Lower lobe of right lung (tissue), 2 donors: ENCODE measurements at regions of chr11 and their contacts with region 1.

Region 1: GRCh38 chr11:124415356-124415923 is 9.2 kb downstream of the OR8B4 start:
- DNase-seq: no peak
- ATAC-seq: no peak
- H3K4me3 ChIP-seq: no peak overlapping the region
- H3K27ac ChIP-seq: no peak overlapping the region
- H3K4me1 ChIP-seq: no peaks in the 10 kb centered on the region
- H3K27me3 ChIP-seq: no peaks in the 10 kb centered on the region
- CTCF ChIP-seq: peak; percentile 85

Region 2: GRCh38 chr11:124467381-124467927 is 52.0 kb after region 1 on chr11:
- intact Hi-C with region 1: no loop called
- DNase-seq: no peak
- ATAC-seq: peak; percentile 29 to 37
- H3K4me3 ChIP-seq: no peak overlapping the region
- H3K27ac ChIP-seq: no peak overlapping the region
- H3K4me1 ChIP-seq: no peaks in the 10 kb centered on the region
- H3K27me3 ChIP-seq: no peaks in the 10 kb centered on the region
- CTCF ChIP-seq: no peak

Region 3: GRCh38 chr11:124586238-124586860 is 170.9 kb after region 1 on chr11:
- intact Hi-C with region 1: loop called (anchors 10 kb)
- DNase-seq: peak; percentile 59
- ATAC-seq: no peak
- H3K4me3 ChIP-seq: no peak overlapping the region
- H3K27ac ChIP-seq: no peak overlapping the region
- H3K4me1 ChIP-seq: no peaks in the 10 kb centered on the region
- H3K27me3 ChIP-seq: peaks cover 7% of the 10 kb centered on the region
- CTCF ChIP-seq: peak; percentile 58

Region 4: GRCh38 chr11:124656774-124657630 is 241.6 kb after region 1 on chr11:
- intact Hi-C with region 1: no loop called
- DNase-seq: no peak
- ATAC-seq: peak; percentile 79 to 86
- H3K4me3 ChIP-seq: no peak overlapping the region
- H3K27ac ChIP-seq: no peak overlapping the region
- H3K4me1 ChIP-seq: no peaks in the 10 kb centered on the region
- H3K27me3 ChIP-seq: no peaks in the 10 kb centered on the region
- CTCF ChIP-seq: no peak

Region 5: GRCh38 chr11:125022551-125022950 is 607.1 kb after region 1 on chr11:
- intact Hi-C with region 1: no loop called
- DNase-seq: no peak
- ATAC-seq: no peak
- H3K4me3 ChIP-seq: no peak overlapping the region
- H3K27ac ChIP-seq: no peak overlapping the region
- H3K4me1 ChIP-seq: no peaks in the 10 kb centered on the region
- H3K27me3 ChIP-seq: no peaks in the 10 kb centered on the region
- CTCF ChIP-seq: no peak